ENCODE measurements at regions of chr17 and their contacts with region 1.

Region 1: GRCh38 chr17:38982858-38983746 is 15.9 kb upstream of the FBXO47 start:
- DNase-seq: peak; percentile 42 to 79 (median 58)
- ATAC-seq: peak; percentile 86
- H3K4me3 ChIP-seq: no peak overlapping the region
- H3K27ac ChIP-seq: no peak overlapping the region
- H3K4me1 ChIP-seq: no peaks in the 10 kb centered on the region; a peak in 1 of 5 replicates
- H3K27me3 ChIP-seq: no peaks in the 10 kb centered on the region; a peak in 1 of 5 replicates
- CTCF ChIP-seq: peak; percentile 77 to 95 (median 83)
- EP300 ChIP-seq: no peak
- POLR2A ChIP-seq: no peak
- RAD21 ChIP-seq: peak; percentile 95 to 98

Region 2: DNA sequence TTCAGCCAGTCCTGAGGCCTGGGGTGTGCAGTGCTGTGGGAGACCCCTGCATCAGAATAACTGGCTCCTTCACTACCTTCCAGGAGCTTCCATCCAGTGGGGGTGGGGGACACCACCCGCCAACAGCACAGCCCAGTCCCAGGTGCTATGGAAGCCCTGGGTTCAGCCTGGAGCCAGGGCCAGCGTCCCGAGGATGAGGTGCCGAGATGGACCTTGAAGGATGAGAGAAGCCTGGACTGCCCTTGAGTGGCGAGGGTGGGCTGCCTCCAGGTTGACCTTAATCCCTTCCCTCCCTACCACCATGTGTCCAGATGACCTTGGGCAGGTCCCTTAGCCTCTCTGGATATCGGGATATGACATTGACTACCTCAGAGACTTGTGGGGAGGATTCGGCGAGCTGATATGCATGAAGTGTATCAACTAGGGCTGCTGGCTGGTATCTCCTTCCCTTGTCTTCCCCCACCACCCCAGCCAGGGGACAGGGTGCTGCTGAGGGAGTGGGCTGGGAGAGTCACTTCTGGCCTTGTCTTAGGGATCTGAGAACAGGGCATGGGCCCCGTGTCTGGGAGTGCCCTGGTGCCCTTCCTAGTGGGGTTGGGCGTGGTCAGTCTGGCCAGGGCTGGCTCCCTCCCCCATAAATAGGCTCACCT is 71.9 kb before region 1 on chr17:
- CTCF ChIA-PET with region 1: no interaction called
- POLR2A ChIA-PET with region 1: no interaction called
- in situ Hi-C with region 1: no loop called
- intact Hi-C with region 1: no loop called
- DNase-seq: peak in 1 of 4 experiments; percentile 5
- ATAC-seq: no peak
- H3K4me3 ChIP-seq: no peak overlapping the region
- H3K27ac ChIP-seq: no peak overlapping the region
- H3K4me1 ChIP-seq: peaks cover 0 to 20% of the 10 kb centered on the region in 2 experiments; a peak in 1 of 5 replicates
- H3K27me3 ChIP-seq: no peaks in the 10 kb centered on the region
- CTCF ChIP-seq: no peak
- EP300 ChIP-seq: no peak
- POLR2A ChIP-seq: no peak
- RAD21 ChIP-seq: no peak

Region 3: DNA sequence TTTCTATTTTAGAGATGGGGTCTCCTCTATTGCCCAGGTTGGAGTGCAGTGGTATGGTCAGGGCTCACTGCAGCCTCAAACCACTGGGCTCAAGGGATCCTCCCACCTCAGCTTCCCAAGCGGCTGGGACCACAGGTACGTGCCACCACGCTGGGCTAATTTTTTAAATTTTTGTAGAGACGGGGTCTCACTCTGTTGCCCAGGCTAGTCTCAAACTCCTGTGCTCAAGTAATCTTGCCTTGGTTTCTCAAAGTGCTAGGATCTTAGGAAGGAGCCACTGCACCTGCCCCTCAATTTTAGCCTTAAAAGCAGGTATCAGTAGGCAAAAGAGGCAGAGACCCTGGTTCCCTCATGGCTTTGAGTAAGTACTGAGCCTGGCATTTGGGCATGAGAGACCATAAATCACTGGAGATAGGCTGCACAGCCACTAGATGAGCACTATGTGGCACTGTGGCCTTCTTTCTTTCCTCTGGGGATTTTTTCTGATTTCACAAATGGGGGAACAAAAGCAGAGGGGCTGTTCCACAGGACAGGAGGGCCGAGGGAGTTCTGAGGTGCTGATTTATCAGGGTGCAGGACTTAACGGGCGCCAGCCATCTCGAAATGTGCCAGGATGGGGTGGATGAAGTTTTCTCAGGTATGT is 86.1 kb after region 1 on chr17:
- CTCF ChIA-PET with region 1: interaction called, 3 read pairs
- POLR2A ChIA-PET with region 1: no interaction called
- in situ Hi-C with region 1: loop called (anchors 5 kb)
- intact Hi-C with region 1: loop called (anchors 10 kb)
- DNase-seq: peak in 3 of 4 experiments; percentile 25 to 48 (median 35)
- ATAC-seq: peak; percentile 69
- H3K4me3 ChIP-seq: no peak overlapping the region
- H3K27ac ChIP-seq: no peak overlapping the region
- H3K4me1 ChIP-seq: no peaks in the 10 kb centered on the region; a peak in 1 of 5 replicates
- H3K27me3 ChIP-seq: peaks cover 33 to 65% of the 10 kb centered on the region in 2 experiments; a peak in 4 of 5 replicates
- CTCF ChIP-seq: peak; percentile 43 to 71 (median 53); a peak in 5 of 6 replicates
- EP300 ChIP-seq: no peak
- POLR2A ChIP-seq: no peak
- RAD21 ChIP-seq: peak; percentile 44 to 59

Region 4: DNA sequence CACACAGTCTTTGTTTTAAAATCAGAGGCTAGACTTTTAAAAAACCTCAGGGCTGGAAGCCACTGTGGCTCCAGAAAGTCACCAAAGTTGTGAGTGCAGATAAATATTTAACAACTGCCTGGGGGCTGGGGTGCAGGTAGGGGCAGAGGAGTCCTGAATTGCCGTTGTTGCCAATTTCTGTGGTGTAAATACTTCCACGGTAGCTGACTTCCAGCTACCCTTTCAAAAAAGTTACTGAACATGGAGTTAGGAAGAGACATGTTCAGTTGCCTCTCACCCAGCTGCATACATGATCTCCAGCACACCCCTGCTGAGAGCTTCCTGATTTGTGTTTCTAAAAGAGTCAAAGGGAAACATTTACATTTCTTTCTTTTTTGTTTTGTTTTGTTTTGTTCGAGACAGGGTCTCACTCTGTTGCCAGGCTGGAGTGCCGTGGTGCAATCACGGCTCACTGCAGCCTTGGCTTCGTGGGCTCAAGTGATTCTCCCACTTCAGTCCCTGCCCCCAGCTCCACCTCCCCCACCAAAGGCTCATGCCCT is 109.7 kb after region 1 on chr17:
- CTCF ChIA-PET with region 1: interaction called, 3 read pairs
- POLR2A ChIA-PET with region 1: no interaction called
- in situ Hi-C with region 1: no loop called
- intact Hi-C with region 1: loop called (anchors 1 kb)
- DNase-seq: no peak
- ATAC-seq: no peak
- H3K4me3 ChIP-seq: no peak overlapping the region
- H3K27ac ChIP-seq: no peak overlapping the region
- H3K4me1 ChIP-seq: no peaks in the 10 kb centered on the region
- H3K27me3 ChIP-seq: peaks cover 40 to 78% of the 10 kb centered on the region in 2 experiments
- CTCF ChIP-seq: no peak
- EP300 ChIP-seq: no peak
- POLR2A ChIP-seq: no peak
- RAD21 ChIP-seq: no peak

Region 5: GRCh38 chr17:39147221-39148185 is 164.4 kb after region 1 on chr17:
- CTCF ChIA-PET with region 1: interaction called, 43 read pairs
- POLR2A ChIA-PET with region 1: interaction called, 3 read pairs
- in situ Hi-C with region 1: loop called (anchors 5 kb)
- intact Hi-C with region 1: no loop called
- DNase-seq: no peak
- ATAC-seq: peak; percentile 61
- H3K4me3 ChIP-seq: no peak overlapping the region
- H3K27ac ChIP-seq: no peak overlapping the region
- H3K4me1 ChIP-seq: peaks cover 5 to 18% of the 10 kb centered on the region in 2 experiments; a peak in 2 of 5 replicates
- H3K27me3 ChIP-seq: peaks cover 8 to 48% of the 10 kb centered on the region in 2 experiments
- CTCF ChIP-seq: no peak
- EP300 ChIP-seq: no peak
- POLR2A ChIP-seq: no peak
- RAD21 ChIP-seq: no peak